ENCODE measurements at regions of chr11 and their contacts with region 1.

Region 1: GRCh38 chr11:11513422-11513821 is 108.4 kb downstream of the GALNT18 start:
- DNase-seq: no peak
- ATAC-seq: no peak
- H3K4me3 ChIP-seq: no peak overlapping the region
- H3K27ac ChIP-seq: no peak overlapping the region
- H3K4me1 ChIP-seq: no peaks in the 10 kb centered on the region
- H3K27me3 ChIP-seq: no peaks in the 10 kb centered on the region
- CTCF ChIP-seq: no peak

Region 2: DNA sequence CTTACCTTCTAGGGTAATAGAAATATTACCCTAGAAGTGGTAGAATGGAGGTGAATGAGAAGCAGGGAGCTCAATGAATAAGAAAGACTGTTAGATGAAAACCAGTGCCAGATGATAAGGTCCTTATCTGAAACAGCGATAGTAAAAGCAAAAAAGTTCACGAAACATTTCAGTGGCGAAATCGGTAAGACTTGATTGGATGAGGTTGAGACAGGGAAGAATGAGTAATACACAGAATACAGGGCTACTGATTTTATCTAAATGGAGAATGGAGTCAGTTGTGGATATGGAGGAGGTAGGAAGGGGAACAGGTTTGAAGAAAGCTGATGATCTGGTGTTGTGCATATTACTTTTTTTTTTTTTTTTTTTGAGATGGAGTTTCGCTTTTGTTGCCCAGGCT is 11.9 kb after region 1 on chr11:
- CTCF ChIA-PET with region 1: no interaction called
- POLR2A ChIA-PET with region 1: interaction called, 16 read pairs
- in situ Hi-C with region 1: no loop called
- intact Hi-C with region 1: no loop called
- DNase-seq: no peak
- ATAC-seq: no peak
- H3K4me3 ChIP-seq: no peak overlapping the region
- H3K27ac ChIP-seq: no peak overlapping the region
- H3K4me1 ChIP-seq: no peaks in the 10 kb centered on the region
- H3K27me3 ChIP-seq: no peaks in the 10 kb centered on the region
- CTCF ChIP-seq: no peak

Region 3: GRCh38 chr11:11611381-11611780 is 98.0 kb after region 1 on chr11:
- CTCF ChIA-PET with region 1: no interaction called
- POLR2A ChIA-PET with region 1: no interaction called
- in situ Hi-C with region 1: no loop called
- intact Hi-C with region 1: no loop called
- DNase-seq: no peak
- ATAC-seq: no peak
- H3K4me3 ChIP-seq: no peak overlapping the region
- H3K27ac ChIP-seq: no peak overlapping the region
- H3K4me1 ChIP-seq: peaks cover 3% of the 10 kb centered on the region; the same call in 1 of the 2 replicates
- H3K27me3 ChIP-seq: no peaks in the 10 kb centered on the region
- CTCF ChIP-seq: no peak

Measured in Panc1 (cell line).